ENCODE measurements at regions of chr11 and their contacts with region 1.

Region 1: GRCh38 chr11:75597636-75598035 is 35.6 kb downstream of the SERPINH1 start:
- DNase-seq: peak in 1 of 7 donors; percentile 30
- H3K4me3 ChIP-seq: no peak overlapping the region
- H3K27ac ChIP-seq: no peak overlapping the region
- H3K4me1 ChIP-seq: peaks cover 0 to 6% of the 10 kb centered on the region in 2 donors
- H3K27me3 ChIP-seq: no peaks in the 10 kb centered on the region
- CTCF ChIP-seq: peak in 5 of 6 experiments; percentile 24 to 48 (median 39)
- POLR2A ChIP-seq: no peak

Region 2: DNA sequence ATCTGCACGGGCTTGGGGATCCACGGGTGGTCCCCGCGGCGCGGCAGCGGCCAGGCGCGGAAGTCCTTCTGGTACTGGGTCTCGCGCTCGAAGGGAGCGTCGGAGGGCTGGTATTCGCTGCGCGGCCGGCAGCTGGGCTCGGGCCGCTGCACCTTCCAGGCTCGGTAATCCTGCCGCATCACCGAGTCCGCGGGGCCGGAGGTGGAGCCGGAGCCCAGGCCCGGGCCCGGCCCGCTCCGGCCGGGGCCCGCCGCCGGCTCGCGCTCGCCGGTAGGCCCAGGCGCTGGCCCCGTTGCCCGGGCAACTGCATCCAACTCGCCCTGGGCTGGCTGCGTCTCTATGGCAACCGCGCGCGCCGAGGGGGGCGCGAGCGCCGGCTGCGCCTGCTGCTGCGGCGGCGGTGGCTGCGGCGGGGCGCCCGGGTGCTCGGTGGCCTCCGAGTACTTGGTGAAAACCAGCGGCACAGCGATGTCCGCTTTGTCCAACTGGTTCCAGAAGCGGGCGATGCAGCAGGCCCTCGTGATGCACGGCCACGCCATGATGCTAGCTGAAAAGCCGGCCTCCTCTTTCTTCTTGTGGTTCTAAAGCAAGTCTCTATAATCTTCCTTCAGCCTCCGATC is 70.3 kb after region 1 on chr11:
- intact Hi-C with region 1: loop called in 1 of 2 experiments (anchors 10 kb)
- DNase-seq: peak; percentile 65 to 84 (median 79)
- H3K4me3 ChIP-seq: peak overlapping the region in 3 of 4 donors; percentile 31 to 78 (median 55)
- H3K27ac ChIP-seq: peak overlapping the region in 4 of 5 donors; percentile 25 to 85 (median 78)
- H3K4me1 ChIP-seq: peaks cover 11 to 15% of the 10 kb centered on the region in 2 donors
- H3K27me3 ChIP-seq: no peaks in the 10 kb centered on the region
- CTCF ChIP-seq: no peak
- POLR2A ChIP-seq: peak in 1 of 2 donors; percentile 25

Region 3: DNA sequence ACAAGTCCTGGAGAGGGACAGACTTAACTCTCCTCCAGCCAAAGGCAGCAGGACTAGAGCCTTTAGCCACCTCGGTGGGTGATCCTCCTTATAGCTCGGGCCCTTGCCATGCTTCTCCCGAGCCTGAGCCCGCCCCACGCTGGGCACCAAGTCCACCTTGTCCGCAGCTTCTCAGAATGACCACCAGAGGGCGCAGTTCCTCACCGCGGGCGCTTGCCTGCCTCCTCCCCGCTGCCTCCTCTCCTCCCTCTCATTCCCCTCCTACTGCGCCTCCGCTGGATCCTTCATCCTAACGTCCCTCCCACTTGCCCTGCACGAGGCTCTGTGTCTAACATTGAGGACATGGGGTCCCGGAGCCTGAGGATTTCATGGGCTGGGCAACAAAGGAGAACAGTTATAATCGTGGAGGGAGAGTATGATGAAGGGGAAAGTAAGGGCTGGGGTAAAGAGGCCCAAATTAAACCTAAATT is 108.7 kb after region 1 on chr11:
- intact Hi-C with region 1: no loop called
- DNase-seq: peak; percentile 61 to 82 (median 74)
- H3K4me3 ChIP-seq: no peak overlapping the region
- H3K27ac ChIP-seq: no peak overlapping the region
- H3K4me1 ChIP-seq: peaks cover 3 to 5% of the 10 kb centered on the region in 2 donors
- H3K27me3 ChIP-seq: no peaks in the 10 kb centered on the region
- CTCF ChIP-seq: peak; percentile 77 to 98 (median 91)
- POLR2A ChIP-seq: no peak

Region 4: DNA sequence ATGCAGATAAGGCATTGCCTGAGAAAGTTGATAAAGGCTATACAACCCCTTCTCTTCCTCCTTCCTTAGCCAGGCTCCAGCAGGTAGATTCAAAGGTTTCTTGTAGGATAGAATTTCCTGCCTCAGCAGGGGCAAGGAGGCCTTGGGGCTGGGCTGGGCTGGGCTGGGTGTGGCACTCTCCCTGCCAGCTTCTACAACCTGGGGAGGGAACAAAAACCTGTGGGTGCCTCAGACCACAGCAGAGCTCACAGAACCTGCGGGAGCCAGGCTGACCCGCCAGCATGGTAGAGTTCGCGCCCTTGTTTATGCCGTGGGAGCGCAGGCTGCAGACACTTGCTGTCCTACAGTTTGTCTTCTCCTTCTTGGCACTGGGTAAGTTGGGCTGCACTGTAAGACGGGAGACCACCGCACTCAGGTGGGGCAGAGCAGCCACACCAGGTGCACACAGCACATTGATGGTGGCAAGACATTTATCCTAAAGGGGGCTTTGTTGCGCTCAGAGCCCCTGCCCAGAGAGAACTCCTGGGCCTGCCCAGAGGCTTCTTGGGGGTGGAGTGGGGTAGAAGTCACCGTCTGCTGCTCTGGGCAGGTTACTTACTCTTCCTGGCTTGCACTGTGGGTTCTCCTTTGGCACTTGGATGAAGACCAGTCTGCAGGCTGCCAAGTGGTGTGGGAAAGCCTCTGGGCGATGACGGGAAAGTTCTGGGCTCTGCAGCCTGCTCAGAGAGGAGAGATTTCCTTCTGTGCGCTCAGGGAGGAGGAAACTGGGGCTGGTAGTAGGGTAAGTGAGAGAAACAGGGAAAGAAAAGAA is 120.2 kb after region 1 on chr11 and contains the start of gene MOGAT2:
- intact Hi-C with region 1: no loop called
- DNase-seq: peak in 1 of 7 donors; percentile 4
- H3K4me3 ChIP-seq: no peak within 1 kb of the TSS
- H3K27ac ChIP-seq: no peak within 1 kb of the TSS
- H3K4me1 ChIP-seq: no peaks in the 10 kb centered on the region
- H3K27me3 ChIP-seq: no peaks in the 10 kb centered on the region
- CTCF ChIP-seq: no peak
- POLR2A ChIP-seq: no peak
- total RNA-seq, gene MOGAT2: 0.11 to 0.14 TPM in 2 of 9 donors, not detected in the others

Measured in adrenal gland (tissue), 19 donors.